Posterior cingulate gyrus (tissue), 11 donors: ENCODE measurements at regions of chr1 and their contacts with region 1.

Region 1: DNA sequence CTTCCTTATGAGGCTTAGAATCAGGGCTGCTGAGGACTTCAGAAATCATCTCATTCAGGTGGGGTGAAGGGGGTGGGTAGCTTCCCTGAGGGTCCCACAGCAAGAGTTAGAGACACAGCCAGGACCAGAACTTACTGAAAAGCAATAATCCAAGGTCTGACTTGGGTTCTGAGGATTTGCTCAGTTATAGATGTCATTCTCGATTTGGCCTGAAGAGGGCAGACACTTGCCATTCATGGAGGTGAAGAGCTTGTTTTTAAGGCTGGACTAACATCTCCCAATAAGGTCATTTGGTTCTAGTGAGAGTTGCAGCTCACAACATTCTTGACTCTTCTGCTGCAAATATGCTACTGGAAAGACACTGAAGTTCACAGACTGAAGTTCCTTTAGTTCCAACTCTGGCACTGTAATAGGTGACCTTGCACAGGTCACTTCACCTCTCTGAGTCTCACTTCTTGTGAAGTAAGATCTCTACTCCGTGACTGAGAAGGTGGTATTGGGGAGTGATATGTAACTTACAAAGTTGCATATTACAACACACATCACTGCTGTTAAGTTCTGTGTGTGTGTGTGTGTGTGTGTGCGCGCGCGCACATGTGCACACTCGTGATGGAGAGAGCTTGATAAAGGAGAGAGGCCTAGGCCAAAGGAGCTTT is 69.8 kb upstream of the DIRAS3 start:
- DNase-seq: peak in 1 of 10 donors; percentile 32

Region 2: DNA sequence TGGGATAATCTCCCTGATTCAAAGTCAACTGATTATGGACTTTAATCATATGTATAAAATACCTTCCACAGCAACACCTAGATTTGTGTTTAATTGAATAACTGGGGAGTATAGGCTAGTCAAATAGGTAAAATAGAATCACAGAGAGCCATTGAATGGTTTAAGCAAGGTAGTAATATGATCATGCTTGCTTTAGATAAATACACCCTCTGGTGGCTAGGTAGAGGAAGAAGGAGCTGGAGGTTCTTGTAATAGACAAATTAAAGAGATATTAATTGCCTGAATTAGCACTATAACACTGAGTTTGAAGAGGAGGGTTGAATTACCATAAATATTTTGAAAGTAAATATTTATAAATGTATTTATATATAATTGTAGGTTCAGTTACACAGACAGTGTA is 110.2 kb before region 1 on chr1:
- intact Hi-C with region 1: no loop called
- DNase-seq: no peak

Region 3: DNA sequence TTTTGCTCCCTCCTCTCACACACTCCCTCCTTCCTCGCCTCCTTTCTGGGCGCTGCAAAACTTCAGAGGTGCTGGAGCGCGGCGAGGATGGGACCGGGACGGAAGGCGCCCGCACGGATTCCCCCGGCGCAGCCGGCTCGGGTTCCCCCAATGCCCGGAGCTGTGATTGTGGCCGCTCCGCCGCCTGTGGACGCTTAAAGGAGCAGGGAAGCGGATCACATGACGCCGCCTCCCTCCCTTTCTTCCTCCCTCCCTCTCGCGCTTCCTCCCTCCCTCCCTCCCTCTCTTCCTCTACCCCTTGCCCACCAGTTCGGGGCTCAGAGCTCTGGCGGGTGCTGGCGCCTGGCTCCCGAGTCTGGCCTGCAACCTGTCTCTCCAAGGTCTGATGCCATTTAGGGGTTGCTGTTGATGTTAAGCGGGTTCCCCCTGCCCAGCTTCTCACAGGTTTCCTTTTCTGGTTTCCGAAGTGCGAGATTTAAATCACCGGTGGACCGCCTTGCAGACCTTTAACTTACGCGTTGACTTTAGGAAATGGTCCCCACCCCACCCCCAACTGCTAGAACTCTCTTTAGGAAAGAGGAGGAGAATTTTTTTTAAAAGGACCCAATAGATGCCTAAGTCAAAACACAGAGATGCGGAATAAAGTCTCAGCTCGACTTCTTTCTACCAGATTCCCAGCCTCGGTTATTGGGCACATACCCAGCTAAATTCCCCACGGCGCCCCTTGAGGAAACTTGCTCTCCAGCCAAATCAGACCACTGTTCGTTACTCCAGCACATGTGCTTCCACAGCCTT is 112.3 kb after region 1 on chr1 and contains the start of gene WLS:
- intact Hi-C with region 1: loop called (anchors 5 kb)
- DNase-seq: peak; percentile 68 to 96 (median 80)

Region 4: GRCh38 chr1:68346188-68346808 is 226.0 kb after region 1 on chr1:
- intact Hi-C with region 1: loop called (anchors 1 kb)
- DNase-seq: no peak

Region 5: DNA sequence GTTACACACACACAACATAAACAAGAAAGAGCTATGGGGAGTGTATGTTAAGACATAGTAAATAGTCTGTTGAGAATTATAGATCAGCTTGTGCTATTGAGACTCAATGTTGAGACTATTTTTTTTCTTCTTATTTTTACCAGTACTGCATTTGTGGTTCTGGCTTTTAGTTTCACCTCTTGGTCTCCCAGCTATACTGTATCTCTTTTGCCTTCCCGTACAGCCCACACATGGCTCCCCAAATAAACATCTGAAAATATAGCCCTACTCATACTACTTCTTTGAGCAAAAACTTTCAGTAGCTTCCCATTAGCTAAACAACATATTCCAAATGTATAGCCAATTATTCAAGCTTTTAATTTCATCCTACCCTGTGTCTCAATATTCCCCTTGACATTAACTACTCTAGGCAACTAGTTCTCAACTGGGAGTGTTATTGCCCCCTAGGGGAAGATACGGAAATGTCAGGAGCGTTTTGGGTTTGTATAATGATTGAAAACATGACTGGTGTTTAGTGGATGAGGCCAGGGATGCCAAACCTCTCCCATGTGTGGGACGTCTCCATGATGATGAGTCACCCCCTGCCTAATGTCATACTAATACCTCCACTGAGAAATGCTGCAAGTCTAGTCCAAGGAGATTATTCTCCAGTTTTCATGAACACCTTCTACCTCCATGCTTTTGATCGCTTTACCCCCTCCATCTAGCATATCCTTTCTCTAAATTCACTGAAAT is 322.7 kb after region 1 on chr1:
- intact Hi-C with region 1: loop called (anchors 5 kb)
- DNase-seq: no peak